Head of caudate nucleus (tissue), 42 donors: ENCODE measurements at regions of chr12 and their contacts with region 1.

Region 1: DNA sequence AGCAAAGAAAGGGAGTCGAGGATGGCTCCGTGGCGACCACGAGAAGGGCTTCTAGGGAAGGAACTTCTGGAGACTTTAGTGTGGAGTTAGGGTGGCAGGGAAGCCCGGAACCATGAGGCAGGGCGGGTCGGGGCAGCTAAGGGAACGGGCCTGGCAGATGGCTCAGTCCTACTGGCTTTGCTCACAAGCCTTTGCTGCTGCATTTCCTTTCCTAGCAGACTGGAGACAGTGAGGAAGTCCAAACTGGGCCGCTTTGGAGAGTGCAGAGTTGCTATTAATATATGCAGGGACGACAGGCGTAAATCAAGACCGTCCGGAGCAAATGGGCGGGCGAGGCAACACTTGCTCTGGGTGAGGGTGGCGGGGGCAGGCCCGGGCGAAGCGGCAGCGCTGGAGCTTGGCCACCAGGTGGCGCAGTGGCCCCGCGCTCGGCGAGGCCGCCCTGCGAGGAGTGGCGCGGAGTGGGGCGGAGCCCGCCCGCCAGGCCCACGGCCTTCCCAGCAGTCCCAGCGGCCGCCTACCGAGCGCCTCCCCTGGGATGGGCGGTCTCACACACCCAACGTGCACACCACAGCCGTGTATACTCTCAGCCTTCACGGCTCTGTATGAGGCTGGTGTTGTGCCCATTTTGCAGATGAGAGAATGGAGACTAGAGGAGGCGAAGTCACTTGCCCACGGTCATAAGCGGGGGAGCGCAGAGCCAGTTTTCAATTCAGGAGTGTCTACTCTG is 24.4 kb upstream of the LRTM2 start:
- DNase-seq: peak; percentile 79 to 96 (median 93)

Region 2: DNA sequence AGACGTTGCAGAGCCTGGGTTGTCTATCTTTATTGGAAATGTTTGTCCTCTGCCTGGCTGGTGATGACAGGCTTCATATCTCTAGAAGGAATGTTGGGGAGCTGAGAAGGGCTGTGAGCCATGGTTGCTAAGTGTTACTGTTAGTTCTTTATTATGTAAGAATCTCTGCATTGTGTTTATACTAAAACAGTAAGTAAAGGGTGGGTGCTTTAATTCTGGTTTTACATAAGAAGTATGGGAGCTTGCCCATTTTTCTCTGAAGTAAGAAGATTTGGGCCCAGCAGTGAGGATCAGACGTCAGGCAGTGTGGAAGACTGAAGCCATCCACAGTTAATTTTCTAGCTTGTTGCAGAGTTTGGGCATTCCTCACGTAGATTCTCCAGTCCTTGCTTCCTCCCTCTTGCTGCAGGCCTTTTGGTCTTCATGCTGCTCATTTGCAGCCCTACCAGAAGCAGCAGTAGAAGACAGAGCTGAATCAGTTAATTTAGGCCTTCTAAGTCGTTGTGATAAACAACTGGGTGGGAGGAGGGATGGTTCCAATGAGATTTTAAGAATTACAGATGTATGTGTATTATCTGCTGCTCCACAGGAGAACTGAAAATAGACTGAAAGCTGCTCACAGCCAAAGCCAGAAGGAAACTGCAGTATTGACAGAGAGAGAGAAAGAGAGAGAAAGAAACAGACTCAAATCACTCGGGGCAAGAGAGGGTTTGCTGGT is 145.5 kb before region 1 on chr12:
- intact Hi-C with region 1: loop called (anchors 2 kb)
- DNase-seq: no peak

Region 3: GRCh38 chr12:1690578-1691122 is 105.3 kb before region 1 on chr12 and contains the start of gene ADIPOR2:
- intact Hi-C with region 1: loop called (anchors 5 kb)
- DNase-seq: peak; percentile 86 to 97 (median 93)

Region 4: DNA sequence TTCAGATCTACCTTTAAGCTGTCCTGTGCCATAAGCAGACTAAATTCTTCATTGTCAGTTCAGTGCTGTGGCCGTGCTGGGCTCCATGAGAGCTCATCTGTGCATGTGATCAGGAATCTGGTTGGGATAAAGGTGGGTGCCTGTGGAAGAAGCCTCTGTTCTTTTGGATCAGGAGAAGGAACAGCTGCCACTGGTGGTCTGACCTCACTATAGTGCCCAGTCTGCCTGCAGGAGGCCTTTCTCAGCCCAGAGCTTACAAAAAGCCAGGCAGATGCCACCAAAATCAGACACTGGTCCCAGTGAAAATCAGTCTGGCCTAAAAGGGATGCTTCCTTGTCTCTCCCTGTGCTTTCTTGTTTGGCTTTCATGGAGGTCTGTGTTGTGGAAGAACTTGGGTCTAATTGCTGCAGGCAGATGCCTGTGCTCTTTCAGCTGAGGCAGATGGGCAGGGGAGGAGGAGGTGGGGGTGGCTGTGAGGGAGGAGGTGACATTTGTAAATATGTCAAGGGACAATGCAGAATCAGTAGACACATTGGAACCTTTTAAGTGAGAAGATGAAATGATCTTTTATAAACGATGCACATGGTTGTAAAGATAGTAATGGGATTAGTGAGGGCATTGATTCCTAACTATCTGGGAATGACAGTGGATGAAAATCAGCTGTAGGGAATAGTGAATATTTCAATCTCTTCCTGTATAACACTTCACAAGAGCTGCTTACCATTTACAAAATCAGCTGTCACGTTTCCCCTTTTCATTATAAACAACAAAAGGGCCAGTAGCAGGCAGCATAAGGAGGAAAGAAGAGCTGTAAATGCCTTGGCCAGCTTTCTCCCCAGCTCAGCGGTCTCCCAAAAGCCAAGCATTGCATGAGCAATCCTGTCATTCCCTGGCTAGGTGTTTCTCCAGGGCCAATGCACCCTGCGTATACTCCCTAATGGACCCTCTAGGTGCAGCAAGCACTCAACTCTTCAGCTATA is 77.9 kb after region 1 on chr12:
- intact Hi-C with region 1: no loop called
- DNase-seq: peak in 1 of 42 donors; percentile 35

Region 5: DNA sequence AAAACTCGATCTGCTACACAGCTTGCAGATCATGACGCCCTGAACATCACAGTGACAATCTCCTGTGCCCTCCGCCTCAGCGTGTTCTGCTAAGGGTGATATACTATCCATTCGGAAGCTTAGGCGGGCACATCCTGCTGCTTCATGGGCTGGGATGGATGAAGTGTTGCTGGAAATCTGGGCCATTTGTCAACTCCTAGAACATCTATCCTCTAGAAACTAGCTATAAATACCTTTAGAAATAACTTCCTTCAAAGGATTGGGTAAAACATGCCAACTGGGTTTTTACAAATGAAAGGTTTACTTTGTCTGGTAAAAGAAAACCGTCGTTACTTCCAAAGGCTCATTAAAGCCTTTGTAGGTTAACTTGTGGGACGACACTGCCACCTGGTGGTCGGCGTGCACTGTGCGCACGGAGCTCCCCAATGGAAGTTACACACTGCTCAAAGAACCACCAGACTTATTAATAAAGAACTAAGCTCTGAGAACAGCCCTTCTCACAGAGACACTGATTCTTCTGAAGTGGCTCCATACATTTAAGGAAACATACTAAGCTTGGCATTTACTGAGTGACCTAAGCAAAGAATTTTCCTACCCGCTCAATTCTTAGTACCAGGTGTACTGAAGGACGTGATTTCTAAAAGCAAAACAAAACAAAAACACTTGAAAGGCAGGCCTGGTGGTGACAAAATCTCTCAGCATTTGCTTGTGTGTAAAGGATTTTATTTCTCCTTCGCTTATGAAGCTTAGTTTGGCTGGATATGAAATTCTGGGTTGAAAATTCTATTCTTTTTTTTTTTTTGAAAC is 144.1 kb after region 1 on chr12:
- intact Hi-C with region 1: loop called (anchors 1 kb)
- DNase-seq: peak; percentile 59 to 97 (median 92)

Region 6: GRCh38 chr12:2034633-2035430 is 238.9 kb after region 1 on chr12:
- intact Hi-C with region 1: loop called (anchors 10 kb)
- DNase-seq: peak; percentile 69 to 97 (median 92)

Region 7: GRCh38 chr12:2631653-2632330 is 835.8 kb after region 1 on chr12:
- intact Hi-C with region 1: no loop called
- DNase-seq: no peak